Right cardiac atrium (tissue), 5 donors: ENCODE measurements at regions of chr2 and their contacts with region 1.

Region 1: GRCh38 chr2:62216616-62217015 is 20.7 kb downstream of the B3GNT2 start:
- DNase-seq: peak in 2 of 3 donors; percentile 61 to 79
- ATAC-seq: peak; percentile 75 to 84
- H3K4me3 ChIP-seq: no peak overlapping the region
- H3K27ac ChIP-seq: peak overlapping the region; percentile 79
- H3K4me1 ChIP-seq: peaks cover 28% of the 10 kb centered on the region
- H3K27me3 ChIP-seq: no peaks in the 10 kb centered on the region

Region 2: DNA sequence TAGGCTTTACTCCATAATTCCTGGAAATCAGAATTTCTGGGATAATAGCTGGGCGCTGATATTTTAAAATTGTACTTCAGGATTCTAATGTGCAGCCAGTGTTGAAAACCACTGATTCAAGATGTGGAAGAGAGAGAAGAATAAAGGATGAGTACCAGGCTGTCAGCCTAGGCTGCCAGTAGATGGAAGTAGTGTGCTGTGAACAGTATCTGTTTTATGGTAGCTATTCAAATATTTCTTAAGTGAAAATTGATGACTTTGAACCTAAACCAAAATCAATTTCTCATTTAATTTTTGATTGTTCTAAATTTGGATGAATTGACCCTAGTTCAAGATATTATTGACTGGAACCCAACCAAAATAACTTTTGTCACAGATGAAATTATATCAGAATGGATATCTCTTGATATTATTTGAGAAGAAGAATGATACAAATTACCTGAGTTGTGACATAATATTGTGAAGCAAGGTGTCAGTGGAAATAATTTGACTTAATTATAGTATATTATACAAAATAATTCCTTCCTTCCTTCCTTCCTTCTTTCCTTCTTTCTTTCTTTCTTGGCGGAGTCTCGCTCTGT is 223.1 kb before region 1 on chr2:
- intact Hi-C with region 1: loop called in 1 of 4 experiments (anchors 10 kb)
- DNase-seq: no peak
- ATAC-seq: peak; percentile 64 to 76
- H3K4me3 ChIP-seq: no peak overlapping the region
- H3K27ac ChIP-seq: no peak overlapping the region
- H3K4me1 ChIP-seq: peaks cover 3% of the 10 kb centered on the region
- H3K27me3 ChIP-seq: no peaks in the 10 kb centered on the region

Region 3: DNA sequence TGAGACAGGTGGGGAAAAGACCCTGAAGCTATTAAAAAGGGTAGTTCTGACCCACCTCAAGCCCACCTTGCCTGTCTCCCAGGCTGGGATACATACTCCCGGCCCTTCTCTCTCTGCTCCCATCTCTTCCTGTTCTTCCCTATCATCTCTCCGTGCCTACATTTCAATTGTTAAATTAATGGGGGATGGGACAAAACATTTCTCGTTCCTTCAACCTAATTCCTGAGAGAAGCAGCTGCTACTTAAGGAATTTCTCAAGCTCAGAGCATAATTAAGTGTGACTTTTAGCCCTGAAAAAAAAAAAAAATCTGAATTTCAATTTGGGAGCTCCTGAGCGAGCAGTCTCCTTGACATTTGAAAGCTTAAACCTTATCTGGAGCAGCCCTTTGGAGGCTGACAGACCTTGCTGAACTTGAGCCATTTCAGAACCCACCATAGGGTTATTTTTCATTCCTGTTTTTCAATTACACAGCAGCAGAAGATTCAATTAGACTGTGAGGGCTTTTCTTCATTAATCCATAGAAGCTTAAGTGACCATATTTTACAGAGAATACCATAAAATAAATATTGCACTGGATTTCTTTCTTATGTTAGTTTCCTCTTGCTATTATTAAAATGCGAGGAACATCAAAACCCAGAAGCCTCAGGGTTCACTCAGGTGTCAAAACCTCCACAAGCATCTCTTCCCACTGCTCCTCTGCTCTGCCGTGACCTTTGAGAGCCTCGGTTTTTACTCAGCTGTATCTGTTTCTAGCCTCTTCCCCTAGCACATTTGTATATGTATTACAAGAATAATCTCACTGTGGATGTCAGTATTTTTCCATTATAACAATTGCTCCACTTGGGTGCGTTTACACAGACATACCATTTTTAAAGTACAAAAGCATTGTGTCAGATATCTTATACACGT is 105.0 kb after region 1 on chr2:
- intact Hi-C with region 1: no loop called
- DNase-seq: no peak
- ATAC-seq: no peak
- H3K4me3 ChIP-seq: no peak overlapping the region
- H3K27ac ChIP-seq: no peak overlapping the region
- H3K4me1 ChIP-seq: peaks cover 2% of the 10 kb centered on the region
- H3K27me3 ChIP-seq: no peaks in the 10 kb centered on the region